ENCODE measurements at regions of chr2 and their contacts with region 1.

Region 1: DNA sequence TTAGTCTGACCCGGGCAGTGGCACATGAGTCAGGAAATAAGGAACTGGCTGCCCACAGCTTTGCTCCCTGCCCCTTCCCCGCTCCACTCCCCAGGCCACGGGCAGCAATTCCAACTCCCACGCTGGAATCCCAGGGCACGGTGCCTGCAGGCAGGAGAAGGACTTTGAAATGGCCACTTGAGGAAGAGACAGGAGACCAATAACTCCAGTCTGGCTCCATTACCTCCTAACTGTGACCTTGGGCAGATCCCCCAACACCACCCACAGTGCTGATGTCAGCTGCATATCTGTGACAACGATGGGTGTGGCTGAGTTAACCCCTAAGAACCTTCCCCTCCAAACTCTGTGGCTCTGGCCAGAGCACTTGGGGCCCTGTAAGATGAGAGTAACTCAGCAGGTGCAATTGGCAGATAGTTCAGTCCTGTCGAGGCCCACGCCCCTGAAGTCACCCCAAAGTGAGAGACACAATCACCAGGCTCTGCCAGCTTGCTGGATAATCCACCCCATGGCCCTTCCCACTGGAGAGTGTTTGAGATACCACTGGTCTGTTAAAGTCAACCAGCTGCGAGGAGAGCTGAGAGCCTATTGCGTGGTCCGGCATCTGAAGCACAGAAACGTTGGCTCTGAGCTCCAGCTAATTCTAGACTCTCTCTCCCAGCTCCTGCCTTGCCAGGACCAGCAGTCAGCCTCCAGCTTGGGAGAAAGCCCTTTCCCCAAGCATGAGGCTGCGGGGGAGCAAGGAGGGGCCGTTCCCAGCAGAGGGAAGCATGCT is 175.2 kb downstream of the TNS1 start:
- DNase-seq: peak in 1 of 2 donors; percentile 83
- ATAC-seq: peak; percentile 21 to 44
- H3K4me3 ChIP-seq: no peak overlapping the region
- H3K27ac ChIP-seq: peak overlapping the region; percentile 99 to 100 (median 99)
- H3K4me1 ChIP-seq: peaks cover 86 to 96% of the 10 kb centered on the region in 2 donors
- H3K27me3 ChIP-seq: no peaks in the 10 kb centered on the region
- CTCF ChIP-seq: no peak
- POLR2A ChIP-seq: peak in 1 of 2 donors; percentile 19

Region 2: DNA sequence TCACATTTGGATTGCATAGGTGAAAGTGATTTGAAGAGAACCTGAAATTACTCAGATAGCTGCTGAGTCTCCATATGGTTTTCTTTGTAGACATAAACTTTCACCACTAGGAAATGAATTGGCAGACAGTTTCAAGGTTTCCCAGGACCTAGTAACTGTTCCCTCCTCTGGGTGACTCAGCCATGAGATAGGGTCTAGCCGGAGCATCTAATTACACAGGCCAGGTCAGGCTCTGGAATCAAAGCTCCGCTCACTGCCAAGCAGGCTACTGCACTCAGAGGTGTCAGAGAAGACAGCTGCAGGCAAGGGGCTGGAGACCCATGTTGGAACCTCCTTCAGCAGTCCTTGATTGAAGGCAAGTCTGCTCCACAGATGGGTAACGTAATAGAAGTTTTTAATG is 254.0 kb before region 1 on chr2:
- in situ Hi-C with region 1: no loop called
- intact Hi-C with region 1: no loop called
- DNase-seq: peak in 1 of 2 donors; percentile 13
- ATAC-seq: no peak
- H3K4me3 ChIP-seq: no peak overlapping the region
- H3K27ac ChIP-seq: no peak overlapping the region
- H3K4me1 ChIP-seq: no peaks in the 10 kb centered on the region
- H3K27me3 ChIP-seq: no peaks in the 10 kb centered on the region
- CTCF ChIP-seq: no peak
- POLR2A ChIP-seq: no peak

Region 3: DNA sequence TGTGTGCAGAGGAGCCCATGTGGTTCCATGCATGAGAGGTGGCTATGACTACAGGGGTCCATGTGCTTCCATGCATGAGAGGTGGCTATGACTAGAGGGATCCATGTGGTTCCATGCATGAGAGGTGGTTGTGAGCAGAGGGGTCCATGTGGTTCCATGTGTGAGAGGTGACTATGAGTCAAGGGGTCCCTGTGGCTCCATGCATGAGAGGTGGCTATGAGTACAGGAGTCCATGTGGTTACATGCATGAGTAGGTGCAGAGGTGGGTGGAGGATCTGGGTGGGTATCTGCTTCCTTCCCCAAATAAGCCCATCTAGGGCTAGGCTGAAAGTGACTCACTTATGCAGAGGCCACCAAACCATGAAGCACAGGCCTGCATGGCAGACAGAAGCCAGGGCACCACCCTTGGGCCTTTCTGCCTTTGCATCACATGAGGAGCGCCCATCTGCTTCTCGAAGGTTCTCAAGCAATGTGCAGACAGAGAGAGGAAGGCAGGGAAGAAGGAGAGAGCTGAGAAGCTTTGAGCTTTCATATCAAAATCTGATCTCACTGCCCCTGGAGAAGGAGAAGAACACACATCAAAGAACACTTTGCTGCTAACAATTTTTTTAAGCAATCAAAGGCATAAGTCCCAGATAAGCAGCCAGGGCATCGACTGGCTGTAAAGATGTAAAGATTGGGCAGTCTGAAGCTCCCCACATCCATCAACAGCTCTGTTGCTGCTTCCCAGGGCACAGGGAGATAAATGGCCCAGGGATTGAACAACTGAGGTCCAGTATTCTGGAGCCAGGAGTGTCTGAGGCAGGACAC is 37.6 kb after region 1 on chr2:
- in situ Hi-C with region 1: no loop called
- intact Hi-C with region 1: loop called (anchors 5 kb)
- DNase-seq: peak in 1 of 2 donors; percentile 12
- ATAC-seq: no peak
- H3K4me3 ChIP-seq: no peak overlapping the region
- H3K27ac ChIP-seq: peak overlapping the region; percentile 77 to 87 (median 85)
- H3K4me1 ChIP-seq: peaks cover 74 to 83% of the 10 kb centered on the region in 2 donors
- H3K27me3 ChIP-seq: no peaks in the 10 kb centered on the region
- CTCF ChIP-seq: no peak
- POLR2A ChIP-seq: no peak

Measured in gastrocnemius medialis (tissue), 4 donors.